AG04449 (cell line): ENCODE measurements at regions of chr12 and their contacts with region 1.

Region 1: GRCh38 chr12:27652174-27652763 is 44.0 kb upstream of the REP15 start:
- DNase-seq: peak; percentile 41
- H3K4me3 ChIP-seq: no peak overlapping the region
- CTCF ChIP-seq: peak; percentile 74

Region 2: DNA sequence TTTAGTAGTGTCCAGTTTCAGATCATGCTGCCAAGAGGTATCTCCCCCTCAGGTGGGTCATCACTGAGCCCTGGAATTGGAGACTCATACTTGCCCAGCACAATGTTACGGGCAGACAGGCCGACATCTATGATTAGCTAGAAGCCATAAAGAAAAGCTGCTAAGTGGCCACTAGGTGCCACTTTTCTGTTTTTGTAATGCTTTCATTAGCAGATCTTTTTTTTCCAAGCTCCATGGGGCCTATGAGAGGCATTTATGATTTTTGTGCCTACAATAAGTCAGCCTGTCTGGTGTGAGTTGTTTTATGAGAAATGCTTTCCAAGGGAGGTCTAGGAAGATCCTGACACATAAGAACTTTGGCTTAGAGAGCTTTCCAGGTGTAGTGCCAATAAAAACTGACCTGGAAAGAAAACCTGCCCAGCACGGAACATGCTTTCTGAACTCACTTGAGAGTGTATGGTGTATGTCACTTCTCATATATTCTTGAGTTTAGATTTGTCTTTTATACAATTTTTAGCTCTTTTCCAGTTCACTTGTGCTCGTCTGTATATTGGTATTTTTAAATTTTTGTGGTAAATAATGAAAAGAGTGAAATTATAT is 227.5 kb before region 1 on chr12:
- CTCF ChIA-PET with region 1: interaction called, 38 read pairs
- POLR2A ChIA-PET with region 1: no interaction called
- DNase-seq: peak; percentile 31
- H3K4me3 ChIP-seq: no peak overlapping the region
- CTCF ChIP-seq: peak; percentile 53

Region 3: DNA sequence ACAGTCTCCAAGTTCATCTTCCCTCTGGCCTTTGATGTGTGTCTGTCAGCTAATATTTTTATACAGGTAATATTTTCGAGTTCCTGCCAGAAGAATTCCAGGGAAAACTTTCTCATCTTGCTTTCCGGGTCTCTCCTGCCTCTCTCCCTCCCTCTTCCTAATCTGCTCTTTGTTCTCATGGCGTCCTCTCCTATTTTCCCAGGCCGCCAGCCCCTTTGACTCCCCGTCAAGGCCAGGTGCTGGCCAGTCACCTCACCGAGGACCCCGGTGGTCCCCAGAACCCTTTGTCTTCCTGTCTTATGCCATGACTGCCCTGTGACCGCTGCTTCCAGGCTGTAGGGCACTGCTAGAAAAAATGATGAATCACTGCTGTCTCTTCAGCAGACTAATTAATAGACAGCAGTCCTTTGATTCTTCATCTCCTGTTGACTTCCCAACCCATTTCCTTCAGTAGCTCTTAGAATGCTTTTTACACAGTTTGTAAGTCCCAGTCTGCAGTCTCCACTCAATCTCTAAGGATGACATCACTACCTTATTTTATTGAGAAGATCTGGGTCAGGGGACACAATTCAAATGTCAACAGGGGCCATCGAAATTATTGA is 87.6 kb before region 1 on chr12:
- CTCF ChIA-PET with region 1: no interaction called
- POLR2A ChIA-PET with region 1: no interaction called
- DNase-seq: no peak
- H3K4me3 ChIP-seq: no peak overlapping the region
- CTCF ChIP-seq: no peak

Region 4: DNA sequence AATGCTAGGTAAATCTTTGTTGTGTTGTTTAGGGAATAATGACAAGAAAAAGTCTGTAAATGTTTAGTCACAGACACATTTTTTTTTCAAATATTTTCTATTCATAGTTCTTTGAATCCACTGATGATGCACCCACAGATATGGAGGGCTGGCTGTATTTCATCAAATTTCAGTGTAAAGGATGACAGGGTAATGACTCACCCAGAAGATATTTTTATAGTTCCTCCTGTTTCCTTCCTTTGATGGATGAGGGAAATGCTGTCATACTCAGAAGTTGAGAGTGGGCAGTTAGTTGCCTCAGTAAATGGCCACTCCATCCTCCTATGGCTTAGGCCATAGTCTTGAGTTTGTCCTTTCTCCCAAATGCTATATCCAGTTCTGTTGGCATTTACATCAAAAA is 33.0 kb before region 1 on chr12:
- CTCF ChIA-PET with region 1: no interaction called
- POLR2A ChIA-PET with region 1: no interaction called
- DNase-seq: no peak
- H3K4me3 ChIP-seq: no peak overlapping the region
- CTCF ChIP-seq: no peak

Region 5: GRCh38 chr12:27635349-27635972 is 16.8 kb before region 1 on chr12:
- CTCF ChIA-PET with region 1: interaction called, 14 read pairs
- POLR2A ChIA-PET with region 1: no interaction called
- DNase-seq: no peak
- H3K4me3 ChIP-seq: no peak overlapping the region
- CTCF ChIP-seq: peak; percentile 47

Region 6: GRCh38 chr12:27667540-27667939 is 15.3 kb after region 1 on chr12:
- CTCF ChIA-PET with region 1: interaction called, 16 read pairs
- POLR2A ChIA-PET with region 1: no interaction called
- DNase-seq: peak; percentile 28
- H3K4me3 ChIP-seq: no peak overlapping the region
- CTCF ChIP-seq: no peak